CD8-positive, alpha-beta memory T cell (primary cell): ENCODE measurements at regions of chr1 and their contacts with region 1.

Region 1: GRCh38 chr1:198620951-198621824 is 17.7 kb upstream of the PTPRC start:
- DNase-seq: peak; percentile 48 to 83 (median 81)
- H3K4me3 ChIP-seq: peak overlapping the region; percentile 52
- H3K4me3 Mint-ChIP-seq: peak overlapping the region; percentile 72 to 92 (median 80)
- H3K27ac ChIP-seq: peak overlapping the region; percentile 62
- H3K27ac Mint-ChIP-seq: peak overlapping the region; percentile 90 to 99 (median 95)
- H3K4me1 ChIP-seq: peaks cover 96% of the 10 kb centered on the region
- H3K4me1 Mint-ChIP-seq: peaks cover 83 to 100% (median 98%) of the 10 kb centered on the region in 3 donors
- H3K27me3 ChIP-seq: no peaks in the 10 kb centered on the region
- H3K27me3 Mint-ChIP-seq: no peaks in the 10 kb centered on the region

Region 2: DNA sequence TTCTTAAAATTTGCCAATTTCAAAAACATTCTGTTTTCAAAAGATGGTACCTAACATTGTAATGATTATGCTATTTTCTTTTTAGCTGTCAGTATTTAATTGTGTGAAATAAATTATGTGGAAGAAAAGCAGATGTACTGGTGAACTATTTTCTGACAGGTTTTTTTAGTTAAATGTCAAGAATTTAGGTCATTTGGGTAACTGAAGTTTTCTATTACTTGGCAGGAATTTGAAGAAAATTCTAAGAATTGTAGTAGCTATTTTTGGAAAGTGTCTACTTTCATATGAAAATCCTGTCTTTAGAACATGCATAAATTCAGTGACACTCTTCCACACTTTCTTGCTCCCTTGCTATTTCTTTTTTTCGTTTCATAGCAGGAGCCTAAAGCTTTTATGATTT is 10.8 kb before region 1 on chr1:
- CTCF ChIA-PET with region 1: interaction called, 23 read pairs
- POLR2A ChIA-PET with region 1: interaction called, 12 read pairs
- DNase-seq: no peak
- H3K4me3 ChIP-seq: peak overlapping the region; percentile 22
- H3K4me3 Mint-ChIP-seq: peak overlapping the region; percentile 7 to 80 (median 63)
- H3K27ac ChIP-seq: no peak overlapping the region
- H3K27ac Mint-ChIP-seq: peak overlapping the region; percentile 88 to 99 (median 92)
- H3K4me1 ChIP-seq: peaks cover 81% of the 10 kb centered on the region
- H3K4me1 Mint-ChIP-seq: peaks cover 70 to 82% (median 77%) of the 10 kb centered on the region in 3 donors
- H3K27me3 ChIP-seq: no peaks in the 10 kb centered on the region
- H3K27me3 Mint-ChIP-seq: peaks cover 0 to 1% of the 10 kb centered on the region in 2 donors

Region 3: GRCh38 chr1:198633675-198634121 is 12.5 kb after region 1 on chr1:
- CTCF ChIA-PET with region 1: interaction called, 51 read pairs
- POLR2A ChIA-PET with region 1: interaction called, 78 read pairs
- DNase-seq: no peak
- H3K4me3 ChIP-seq: peak overlapping the region; percentile 4
- H3K4me3 Mint-ChIP-seq: peak overlapping the region in 6 of 7 donors; percentile 1 to 84 (median 34)
- H3K27ac ChIP-seq: no peak overlapping the region
- H3K27ac Mint-ChIP-seq: peak overlapping the region in 7 of 8 donors; percentile 55 to 85 (median 77)
- H3K4me1 ChIP-seq: peaks cover 90% of the 10 kb centered on the region
- H3K4me1 Mint-ChIP-seq: peaks cover 75 to 90% (median 88%) of the 10 kb centered on the region in 3 donors
- H3K27me3 ChIP-seq: no peaks in the 10 kb centered on the region
- H3K27me3 Mint-ChIP-seq: no peaks in the 10 kb centered on the region

Region 4: GRCh38 chr1:198638894-198639635 is 17.9 kb after region 1 on chr1 and contains the start of gene PTPRC:
- CTCF ChIA-PET with region 1: interaction called, 51 read pairs
- POLR2A ChIA-PET with region 1: interaction called, 78 read pairs
- DNase-seq: peak in 2 of 5 donors; percentile 57 to 69
- H3K4me3 ChIP-seq: peak within 1 kb of the TSS; percentile 70
- H3K4me3 Mint-ChIP-seq: peak within 1 kb of the TSS; percentile 85 to 97 (median 89)
- H3K27ac ChIP-seq: peak within 1 kb of the TSS; percentile 91
- H3K27ac Mint-ChIP-seq: peak within 1 kb of the TSS; percentile 82 to 99 (median 94)
- H3K4me1 ChIP-seq: peaks cover 52% of the 10 kb centered on the region
- H3K4me1 Mint-ChIP-seq: peaks cover 49 to 62% (median 49%) of the 10 kb centered on the region in 3 donors
- H3K27me3 ChIP-seq: no peaks in the 10 kb centered on the region
- H3K27me3 Mint-ChIP-seq: no peaks in the 10 kb centered on the region
- total RNA-seq, gene PTPRC: 311 to 319 TPM

Region 5: GRCh38 chr1:198657550-198658064 is 36.4 kb after region 1 on chr1:
- CTCF ChIA-PET with region 1: interaction called, 13 read pairs
- POLR2A ChIA-PET with region 1: interaction called, 4 read pairs
- DNase-seq: peak in 4 of 5 donors; percentile 23 to 74 (median 57)
- H3K4me3 ChIP-seq: peak overlapping the region; percentile 37
- H3K4me3 Mint-ChIP-seq: peak overlapping the region; percentile 63 to 85 (median 78)
- H3K27ac ChIP-seq: peak overlapping the region; percentile 41
- H3K27ac Mint-ChIP-seq: peak overlapping the region; percentile 84 to 98 (median 94)
- H3K4me1 ChIP-seq: peaks cover 88% of the 10 kb centered on the region
- H3K4me1 Mint-ChIP-seq: peaks cover 70 to 99% (median 86%) of the 10 kb centered on the region in 3 donors
- H3K27me3 ChIP-seq: no peaks in the 10 kb centered on the region
- H3K27me3 Mint-ChIP-seq: no peaks in the 10 kb centered on the region

Region 6: DNA sequence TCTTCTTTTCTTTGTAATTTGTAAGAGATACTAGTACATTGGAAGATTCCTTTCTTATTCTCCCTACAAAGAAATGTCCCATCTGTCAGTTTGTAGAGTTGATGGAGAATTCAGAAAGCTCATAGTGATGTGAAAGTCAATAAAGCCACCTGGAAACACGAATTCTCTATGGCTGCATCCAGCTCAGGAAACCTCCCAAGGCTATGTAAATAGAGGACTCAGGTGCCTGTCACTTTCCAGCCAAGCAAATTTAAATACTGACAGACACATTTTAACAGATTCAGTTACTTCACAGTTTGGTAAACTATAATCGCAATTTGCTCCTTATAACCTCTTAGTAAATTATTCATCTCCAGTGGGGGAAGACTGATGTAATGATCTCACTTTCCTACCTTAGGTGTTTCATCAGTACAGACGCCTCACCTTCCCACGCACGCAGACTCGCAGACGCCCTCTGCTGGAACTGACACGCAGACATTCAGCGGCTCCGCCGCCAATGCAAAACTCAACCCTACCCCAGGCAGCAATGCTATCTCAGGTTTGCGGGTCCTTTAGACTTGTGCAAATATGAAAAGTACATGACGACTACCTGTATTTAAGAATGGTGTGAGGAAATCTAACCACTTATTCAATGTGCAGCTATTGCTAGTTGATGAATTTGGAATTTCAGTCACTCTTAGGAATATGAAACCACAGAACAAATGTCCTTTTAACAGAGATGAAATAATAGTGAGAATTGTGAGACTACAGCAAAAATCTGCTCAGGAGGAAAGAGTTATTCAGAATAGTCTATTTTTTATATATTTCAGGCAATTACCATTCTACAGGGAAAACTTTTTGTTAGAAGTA is 78.2 kb after region 1 on chr1:
- CTCF ChIA-PET with region 1: interaction called, 16 read pairs
- POLR2A ChIA-PET with region 1: interaction called, 4 read pairs
- DNase-seq: peak; percentile 53 to 83 (median 58)
- H3K4me3 ChIP-seq: no peak overlapping the region
- H3K4me3 Mint-ChIP-seq: peak overlapping the region in 6 of 7 donors; percentile 30 to 68 (median 56)
- H3K27ac ChIP-seq: no peak overlapping the region
- H3K27ac Mint-ChIP-seq: peak overlapping the region; percentile 59 to 93 (median 82)
- H3K4me1 ChIP-seq: peaks cover 74% of the 10 kb centered on the region
- H3K4me1 Mint-ChIP-seq: peaks cover 80 to 94% (median 94%) of the 10 kb centered on the region in 3 donors
- H3K27me3 ChIP-seq: no peaks in the 10 kb centered on the region
- H3K27me3 Mint-ChIP-seq: no peaks in the 10 kb centered on the region